ENCODE measurements at regions of chrX and their contacts with region 1.

Region 1: GRCh38 chrX:38803586-38804431 is 2.5 kb downstream of the MID1IP1 start:
- H3K4me3 Mint-ChIP-seq: peak overlapping the region; percentile 82
- H3K27ac Mint-ChIP-seq: peak overlapping the region; percentile 95
- H3K4me1 Mint-ChIP-seq: peaks cover 10% of the 10 kb centered on the region
- H3K27me3 Mint-ChIP-seq: no peaks in the 10 kb centered on the region

Region 2: GRCh38 chrX:38726597-38726996 is 77.2 kb before region 1 on chrX:
- intact Hi-C with region 1: no loop called
- H3K4me3 Mint-ChIP-seq: no peak overlapping the region
- H3K27ac Mint-ChIP-seq: no peak overlapping the region
- H3K4me1 Mint-ChIP-seq: no peaks in the 10 kb centered on the region
- H3K27me3 Mint-ChIP-seq: no peaks in the 10 kb centered on the region

Region 3: GRCh38 chrX:38841750-38842149 is 37.9 kb after region 1 on chrX:
- intact Hi-C with region 1: loop called (anchors 5 kb)
- H3K4me3 Mint-ChIP-seq: no peak overlapping the region
- H3K27ac Mint-ChIP-seq: no peak overlapping the region
- H3K4me1 Mint-ChIP-seq: no peaks in the 10 kb centered on the region
- H3K27me3 Mint-ChIP-seq: peaks cover 3% of the 10 kb centered on the region

Region 4: GRCh38 chrX:38868941-38869401 is 65.2 kb after region 1 on chrX:
- intact Hi-C with region 1: loop called (anchors 5 kb)
- H3K4me3 Mint-ChIP-seq: no peak overlapping the region
- H3K27ac Mint-ChIP-seq: peak overlapping the region; percentile 86
- H3K4me1 Mint-ChIP-seq: peaks cover 31% of the 10 kb centered on the region
- H3K27me3 Mint-ChIP-seq: no peaks in the 10 kb centered on the region

Region 5: GRCh38 chrX:38985375-38985774 is 181.6 kb after region 1 on chrX:
- intact Hi-C with region 1: loop called (anchors 10 kb)
- H3K4me3 Mint-ChIP-seq: no peak overlapping the region
- H3K27ac Mint-ChIP-seq: no peak overlapping the region
- H3K4me1 Mint-ChIP-seq: peaks cover 24% of the 10 kb centered on the region
- H3K27me3 Mint-ChIP-seq: peaks cover 2% of the 10 kb centered on the region

Measured in dendritic cell treated with granulocyte-macrophage colony-stimulating factor and Interleukin-4, amounts not matched to agents 40 ng/mL and 50 ng/mL, for 4 days (primary cell).